ENCODE measurements at regions of chr14 and their contacts with region 1.

Region 1: DNA sequence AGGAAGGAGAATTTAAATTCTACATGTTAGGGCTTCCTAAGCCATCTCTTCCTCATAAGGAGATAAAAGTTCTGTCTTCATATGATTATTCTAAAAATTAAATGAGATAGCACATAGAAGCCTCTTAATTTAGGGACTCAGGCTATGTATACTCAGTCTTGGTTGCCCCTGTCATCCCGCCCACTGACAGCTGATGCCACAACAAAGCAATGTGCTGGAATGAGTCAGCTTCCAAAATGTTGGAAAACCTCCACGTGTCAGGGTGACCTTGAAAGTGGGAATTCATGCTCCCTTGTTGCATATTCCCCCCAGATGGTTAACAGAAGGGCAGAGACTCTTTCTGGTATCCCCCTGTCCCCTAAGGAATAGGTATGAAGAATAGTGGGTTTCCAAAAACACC is 238.0 kb upstream of the DDHD1 start:
- DNase-seq: no peak
- H3K4me3 ChIP-seq: no peak overlapping the region
- CTCF ChIP-seq: no peak

Region 2: DNA sequence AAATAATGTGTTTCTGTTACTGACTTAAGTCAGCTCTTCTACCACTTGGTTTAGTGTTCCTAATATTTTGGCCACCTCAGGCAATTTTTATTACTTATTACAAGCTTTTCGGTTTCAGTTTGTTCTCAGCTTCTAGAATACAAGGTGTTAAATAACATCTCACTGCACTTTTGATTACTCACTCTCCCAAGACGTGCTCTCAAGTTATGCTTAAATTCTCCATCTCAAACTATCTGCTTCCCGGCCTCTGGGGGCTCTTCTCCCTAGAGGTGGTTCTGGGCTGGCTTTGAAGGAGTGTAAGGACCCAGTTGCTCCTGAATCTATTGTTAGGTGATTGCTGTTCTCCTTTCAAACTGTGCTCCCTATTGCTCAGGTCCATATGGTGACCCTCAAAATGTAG is 44.2 kb before region 1 on chr14:
- in situ Hi-C with region 1: loop called (anchors 5 kb)
- DNase-seq: no peak
- H3K4me3 ChIP-seq: no peak overlapping the region
- CTCF ChIP-seq: no peak

Region 3: DNA sequence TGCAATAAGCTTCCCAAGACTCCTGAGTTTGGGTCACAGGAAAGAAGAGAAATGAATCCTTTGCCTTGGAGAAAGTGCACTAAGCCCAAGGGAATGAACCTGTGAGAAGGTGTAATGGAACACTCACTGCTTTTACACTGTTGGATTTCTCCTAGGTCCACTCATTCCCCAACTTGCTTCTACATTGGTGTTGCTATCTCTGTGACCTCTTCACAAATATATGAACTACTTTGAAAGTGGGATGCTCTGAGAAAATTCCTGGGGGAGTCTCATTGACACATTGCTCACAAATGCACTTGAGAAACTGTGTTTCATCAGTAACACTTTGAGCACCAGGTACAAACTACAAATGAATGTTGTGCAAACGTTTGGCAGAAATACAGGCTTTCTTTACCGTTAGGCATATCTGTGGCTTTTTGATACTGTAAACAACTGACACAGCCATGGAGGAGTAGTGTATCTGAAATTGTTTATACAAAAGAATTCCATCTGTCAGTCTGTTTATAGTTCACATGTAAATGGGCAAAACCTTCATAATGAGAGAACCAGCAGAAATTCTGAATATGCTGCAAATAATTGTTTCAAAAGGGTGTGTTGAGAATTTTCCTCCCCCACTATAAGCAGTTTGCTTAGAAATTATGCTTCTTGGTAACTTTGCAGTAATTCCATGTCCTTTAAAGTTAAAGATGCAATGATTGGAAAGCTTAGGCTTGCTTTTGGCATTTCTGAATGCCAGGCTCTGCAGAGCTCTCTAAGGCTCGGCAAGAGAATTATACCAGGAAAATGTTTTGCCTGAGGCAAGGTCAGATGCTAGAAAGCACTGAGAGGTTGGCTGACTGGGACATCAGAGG is 110.4 kb after region 1 on chr14:
- in situ Hi-C with region 1: no loop called
- DNase-seq: no peak
- H3K4me3 ChIP-seq: no peak overlapping the region
- CTCF ChIP-seq: no peak